H1 (cell line): ENCODE measurements at regions of chr10 and their contacts with region 1.

Region 1: DNA sequence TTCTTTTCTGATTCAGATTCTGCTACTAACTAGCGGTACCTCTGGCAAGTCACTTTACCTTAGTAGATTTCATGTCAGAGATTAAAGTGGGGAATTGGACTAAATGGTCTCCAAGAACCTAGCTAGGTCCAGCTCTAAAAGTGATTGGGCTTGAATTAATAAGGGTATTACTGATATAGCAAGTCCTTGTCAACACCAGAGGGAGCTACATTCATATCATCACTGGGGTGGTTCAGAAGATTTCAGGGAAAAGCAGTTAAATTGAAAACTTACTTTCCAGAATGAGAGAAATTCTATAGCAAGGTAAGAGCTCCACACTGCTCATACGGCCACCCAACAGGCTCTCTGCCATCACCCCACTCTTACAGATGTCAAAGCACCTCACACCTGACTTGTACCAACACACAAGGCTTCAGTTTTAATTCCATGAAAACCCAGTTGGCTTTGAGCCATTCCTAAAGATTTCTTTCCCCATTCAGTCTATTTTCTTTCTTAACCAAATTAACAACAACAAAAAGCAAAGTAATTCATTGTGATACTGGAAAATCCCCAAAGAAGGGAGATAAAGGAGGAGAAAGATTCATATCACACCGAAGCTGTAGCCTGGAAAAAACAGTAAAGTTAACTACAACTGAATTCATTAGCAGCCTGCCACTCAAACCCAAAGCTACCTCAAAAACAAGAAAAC is 38.0 kb upstream of the SPOCK2 start:
- DNase-seq: no peak
- H3K4me3 ChIP-seq: no peak overlapping the region; a peak in 1 of 8 replicates
- H3K27ac ChIP-seq: no peak overlapping the region; the same call in 1 of the 2 replicates
- H3K4me1 ChIP-seq: peaks cover 0 to 5% (median 2%) of the 10 kb centered on the region in 4 experiments; a peak in 2 of 7 replicates
- H3K27me3 ChIP-seq: no peaks in the 10 kb centered on the region
- CTCF ChIP-seq: peak in 2 of 3 experiments; percentile 45 to 47; a peak in 2 of 4 replicates
- EP300 ChIP-seq: no peak
- POLR2A ChIP-seq: no peak
- RAD21 ChIP-seq: peak; percentile 59 to 66

Region 2: DNA sequence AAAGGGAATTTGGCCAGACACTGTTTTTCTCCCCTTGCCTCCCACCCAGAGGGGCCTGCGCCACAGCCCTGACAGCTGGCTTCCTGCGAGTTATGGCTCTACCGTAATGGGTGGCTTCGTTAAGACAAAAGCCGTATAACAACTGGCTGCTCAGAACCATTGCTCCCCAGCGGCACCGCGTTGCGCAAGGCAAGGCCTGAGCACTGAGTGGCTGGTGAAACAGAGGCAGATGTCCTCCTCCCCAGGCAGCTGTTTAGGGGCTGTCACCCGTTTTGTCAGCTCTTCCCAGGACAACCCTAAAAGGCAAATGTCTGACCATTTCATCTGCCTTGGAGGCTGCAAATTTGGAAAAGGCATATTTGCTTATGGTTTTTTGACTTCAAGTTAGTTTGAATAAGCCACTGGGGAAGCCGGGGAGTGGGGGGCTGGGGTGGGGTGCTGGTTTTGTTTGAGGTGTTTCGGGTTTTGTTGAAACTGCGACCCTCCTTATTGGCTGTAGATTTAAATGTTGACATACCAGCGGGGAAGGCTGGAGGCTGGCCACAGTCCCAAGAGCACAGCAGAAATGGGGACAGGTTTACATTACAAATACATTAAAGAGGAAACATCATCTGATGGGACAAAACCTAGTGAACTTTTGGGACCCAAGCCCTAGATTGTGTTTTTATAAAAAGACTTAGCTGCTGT is 37.3 kb before region 1 on chr10:
- CTCF ChIA-PET with region 1: interaction called, 13 read pairs
- POLR2A ChIA-PET with region 1: no interaction called
- DNase-seq: peak in 1 of 2 experiments; percentile 62
- H3K4me3 ChIP-seq: peak overlapping the region; percentile 49 to 60 (median 54); a peak in 5 of 8 replicates
- H3K27ac ChIP-seq: no peak overlapping the region
- H3K4me1 ChIP-seq: peaks cover 3 to 22% (median 11%) of the 10 kb centered on the region in 4 experiments
- H3K27me3 ChIP-seq: peaks cover 19 to 50% (median 45%) of the 10 kb centered on the region in 4 experiments
- CTCF ChIP-seq: no peak
- EP300 ChIP-seq: no peak
- POLR2A ChIP-seq: no peak
- RAD21 ChIP-seq: no peak

Region 3: GRCh38 chr10:72215652-72216549 is 89.6 kb after region 1 on chr10 and contains the starts of genes ANAPC16 and ASCC1:
- CTCF ChIA-PET with region 1: interaction called, 39 read pairs
- POLR2A ChIA-PET with region 1: no interaction called
- DNase-seq: peak; percentile 75 to 98
- H3K4me3 ChIP-seq: peak within 1 kb of the TSS; percentile 76 to 85 (median 81)
- H3K27ac ChIP-seq: peak within 1 kb of the TSS; percentile 98
- H3K4me1 ChIP-seq: peaks cover 0 to 7% (median 3%) of the 10 kb centered on the region in 4 experiments; a peak in 3 of 7 replicates
- H3K27me3 ChIP-seq: no peaks in the 10 kb centered on the region
- CTCF ChIP-seq: no peak
- EP300 ChIP-seq: no peak
- POLR2A ChIP-seq: peak; percentile 95 to 99
- RAD21 ChIP-seq: 0 out of 4 replicates have a peak, but pooled peaks of 1 of the 2 experiments have one; percentile 0
- total RNA-seq, gene ANAPC16: 56.2 and 57.4 TPM in 2 replicates
- total RNA-seq, gene ASCC1: 30.2 and 35.8 TPM in 2 replicates

Region 4: DNA sequence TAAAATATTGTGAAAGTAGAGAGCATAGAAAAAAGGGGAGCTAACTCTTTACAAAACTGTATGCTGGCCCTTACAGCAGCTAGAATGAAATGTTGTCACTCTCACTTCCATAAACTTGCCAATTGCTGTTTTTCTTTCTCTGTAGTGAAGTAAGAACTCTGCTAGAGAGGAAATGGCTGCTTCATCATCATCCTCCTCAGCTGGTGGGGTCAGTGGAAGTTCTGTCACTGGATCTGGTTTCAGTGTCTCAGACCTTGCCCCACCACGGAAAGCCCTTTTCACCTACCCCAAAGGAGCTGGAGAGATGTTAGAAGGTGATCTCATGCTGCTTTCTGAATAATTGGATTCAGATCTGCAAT is 97.4 kb after region 1 on chr10:
- CTCF ChIA-PET with region 1: interaction called, 39 read pairs
- POLR2A ChIA-PET with region 1: interaction called, 3 read pairs
- DNase-seq: no peak
- H3K4me3 ChIP-seq: no peak overlapping the region
- H3K27ac ChIP-seq: no peak overlapping the region
- H3K4me1 ChIP-seq: peaks cover 0 to 2% (median under 1%) of the 10 kb centered on the region in 4 experiments; a peak in 2 of 7 replicates
- H3K27me3 ChIP-seq: no peaks in the 10 kb centered on the region
- CTCF ChIP-seq: no peak
- EP300 ChIP-seq: no peak
- POLR2A ChIP-seq: no peak
- RAD21 ChIP-seq: no peak

Region 5: GRCh38 chr10:72278668-72279393 is 152.5 kb after region 1 on chr10:
- CTCF ChIA-PET with region 1: interaction called, 12 read pairs
- POLR2A ChIA-PET with region 1: interaction called, 10 read pairs
- DNase-seq: no peak
- H3K4me3 ChIP-seq: no peak overlapping the region
- H3K27ac ChIP-seq: no peak overlapping the region
- H3K4me1 ChIP-seq: peaks cover 0 to 15% (median 7%) of the 10 kb centered on the region in 4 experiments; a peak in 6 of 7 replicates
- H3K27me3 ChIP-seq: no peaks in the 10 kb centered on the region
- CTCF ChIP-seq: peak in 2 of 3 experiments; percentile 4 to 5; a peak in 2 of 4 replicates
- EP300 ChIP-seq: no peak
- POLR2A ChIP-seq: no peak
- RAD21 ChIP-seq: no peak

Region 6: DNA sequence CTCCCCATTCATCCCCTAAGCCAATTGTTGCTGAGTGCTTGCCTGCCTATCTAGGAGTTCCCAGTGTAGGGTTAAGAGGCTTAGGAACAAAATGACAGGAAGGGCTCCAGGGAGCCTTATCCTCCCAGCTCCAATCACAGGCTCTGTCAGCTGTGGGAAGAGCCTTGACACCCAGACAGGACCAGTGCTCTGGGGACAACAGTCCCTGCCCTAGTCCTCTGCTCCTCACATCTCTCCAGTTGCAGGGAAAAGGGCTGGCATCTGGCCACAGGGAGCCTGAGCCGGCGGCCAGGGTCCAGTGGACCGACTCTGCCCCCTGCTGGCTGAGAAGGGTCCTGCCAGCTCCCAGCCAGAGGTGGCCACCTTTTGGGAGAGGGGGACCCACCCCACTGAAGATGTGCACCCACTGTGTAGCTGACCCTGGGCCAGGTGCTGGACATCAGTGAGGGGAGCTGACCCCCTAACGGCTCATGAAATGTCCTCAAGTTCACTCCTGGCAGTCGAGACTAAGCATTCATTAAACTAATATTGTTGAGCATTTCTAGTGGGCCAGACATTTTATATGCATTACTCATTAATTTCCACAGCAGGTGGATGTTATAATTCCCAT is 210.8 kb after region 1 on chr10:
- CTCF ChIA-PET with region 1: interaction called, 19 read pairs
- POLR2A ChIA-PET with region 1: interaction called, 4 read pairs
- DNase-seq: peak in 1 of 2 experiments; percentile 91
- H3K4me3 ChIP-seq: no peak overlapping the region
- H3K27ac ChIP-seq: no peak overlapping the region
- H3K4me1 ChIP-seq: peaks cover 0 to 22% (median 11%) of the 10 kb centered on the region in 4 experiments; a peak in 6 of 7 replicates
- H3K27me3 ChIP-seq: no peaks in the 10 kb centered on the region
- CTCF ChIP-seq: peak in 2 of 3 experiments; percentile 92 to 93; a peak in 3 of 4 replicates
- EP300 ChIP-seq: no peak
- POLR2A ChIP-seq: no peak
- RAD21 ChIP-seq: peak; percentile 91 to 95